ENCODE measurements at regions of chr5 and their contacts with region 1.

Region 1: DNA sequence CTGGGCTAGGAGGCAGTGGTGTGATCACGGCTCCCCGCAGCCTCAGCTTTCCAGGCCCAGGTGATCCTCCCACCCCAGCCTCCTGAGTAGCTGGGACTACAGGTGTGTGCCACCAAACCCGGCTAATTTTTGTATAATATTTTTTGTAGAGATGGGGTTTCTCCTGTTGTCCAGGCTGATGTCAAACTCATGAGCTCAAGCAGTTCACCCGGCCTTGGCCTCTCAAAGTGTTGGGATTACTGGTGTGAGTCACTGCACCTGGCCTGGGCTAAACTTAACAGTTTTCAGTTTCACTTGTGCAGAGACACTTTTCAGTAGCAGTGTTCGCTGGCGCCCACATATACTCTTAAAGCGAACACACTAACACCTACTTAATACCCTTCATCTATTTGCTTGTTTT is 205.6 kb upstream of the ZNF608 start:
- DNase-seq: peak; percentile 69
- ATAC-seq: peak; percentile 98
- H3K4me3 ChIP-seq: peak overlapping the region; percentile 18; the same call in 1 of the 2 replicates
- H3K27ac ChIP-seq: peak overlapping the region; percentile 75
- H3K4me1 ChIP-seq: peaks cover 15% of the 10 kb centered on the region
- H3K27me3 ChIP-seq: no peaks in the 10 kb centered on the region
- CTCF ChIP-seq: no peak
- EP300 ChIP-seq: peak in 1 of 2 experiments; percentile 57; a peak in 1 of 4 replicates
- POLR2A ChIP-seq: no peak
- RAD21 ChIP-seq: peak; percentile 28

Region 2: DNA sequence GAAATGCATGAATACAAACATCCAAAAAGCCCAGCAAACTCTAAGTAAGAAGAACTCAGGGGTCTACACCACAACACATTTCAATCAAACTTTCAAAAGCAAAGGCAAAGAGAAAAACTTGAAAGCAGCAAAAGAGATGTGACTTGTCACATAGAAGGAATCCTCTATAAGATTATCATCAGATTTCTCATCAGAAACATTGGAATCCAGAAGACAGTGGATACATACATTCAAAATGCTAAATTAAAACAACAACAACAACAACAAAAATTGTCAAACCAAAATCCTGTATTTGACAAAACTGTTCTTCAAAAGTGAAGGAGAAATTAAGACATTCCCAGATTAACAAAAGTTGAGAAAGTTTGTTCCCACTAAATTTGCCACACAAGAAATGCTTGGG is 568.4 kb before region 1 on chr5:
- CTCF ChIA-PET with region 1: no interaction called
- POLR2A ChIA-PET with region 1: no interaction called
- RAD21 ChIA-PET with region 1: no interaction called
- SMC1A ChIA-PET with region 1: no interaction called
- in situ Hi-C with region 1: no loop called
- intact Hi-C with region 1: no loop called
- DNase-seq: no peak
- ATAC-seq: no peak
- H3K4me3 ChIP-seq: no peak overlapping the region
- H3K27ac ChIP-seq: no peak overlapping the region
- H3K4me1 ChIP-seq: no peaks in the 10 kb centered on the region
- H3K27me3 ChIP-seq: no peaks in the 10 kb centered on the region
- CTCF ChIP-seq: no peak
- EP300 ChIP-seq: no peak
- POLR2A ChIP-seq: no peak
- RAD21 ChIP-seq: no peak

Region 3: DNA sequence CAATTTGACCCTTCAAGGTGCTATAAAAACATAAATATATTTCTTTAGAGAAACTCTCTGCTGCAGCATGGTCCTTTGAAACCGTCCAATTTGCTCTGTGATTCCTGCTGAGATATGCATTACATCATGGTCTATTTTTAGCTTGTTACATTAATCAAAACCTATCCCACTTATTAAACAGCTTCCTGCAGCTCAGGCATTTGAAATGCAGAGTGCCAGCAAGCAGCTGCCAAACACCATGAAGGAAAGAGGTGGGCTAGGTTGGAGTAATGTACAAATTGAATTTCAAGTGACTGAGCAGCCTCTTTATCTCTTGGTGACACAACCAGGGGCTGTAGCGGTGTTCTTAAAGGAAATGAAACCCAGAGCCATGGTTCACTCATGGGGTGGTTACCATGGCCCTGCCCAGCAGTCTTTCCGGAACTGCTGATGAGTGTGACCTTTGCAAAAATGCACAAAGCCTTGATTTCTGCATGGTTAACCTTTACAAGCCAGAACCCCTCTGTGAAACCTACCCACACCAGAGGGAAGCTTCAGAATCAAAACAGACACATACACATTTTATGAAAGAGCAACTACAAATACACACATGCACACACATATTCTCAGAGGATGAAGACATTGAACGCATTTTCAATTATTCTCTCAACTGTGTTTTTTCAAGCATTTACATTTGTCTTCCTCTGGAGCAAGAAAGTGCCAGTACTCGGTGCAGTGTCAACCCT is 49.8 kb before region 1 on chr5:
- CTCF ChIA-PET with region 1: interaction called, 3 read pairs
- POLR2A ChIA-PET with region 1: no interaction called
- RAD21 ChIA-PET with region 1: no interaction called
- SMC1A ChIA-PET with region 1: interaction called, 3 read pairs
- in situ Hi-C with region 1: no loop called
- intact Hi-C with region 1: loop called (anchors 5 kb)
- DNase-seq: peak; percentile 92
- ATAC-seq: peak; percentile 99
- H3K4me3 ChIP-seq: 0 out of 2 replicates have a peak overlapping the region, but pooled peaks have one; percentile 15
- H3K27ac ChIP-seq: peak overlapping the region; percentile 59
- H3K4me1 ChIP-seq: peaks cover 17% of the 10 kb centered on the region
- H3K27me3 ChIP-seq: no peaks in the 10 kb centered on the region
- CTCF ChIP-seq: no peak
- EP300 ChIP-seq: peak; percentile 77 to 90; a peak in 3 of 4 replicates
- POLR2A ChIP-seq: 0 out of 2 replicates have a peak, but pooled peaks have one; percentile 33
- RAD21 ChIP-seq: peak; percentile 33; the same call in 1 of the 2 replicates

Region 4: DNA sequence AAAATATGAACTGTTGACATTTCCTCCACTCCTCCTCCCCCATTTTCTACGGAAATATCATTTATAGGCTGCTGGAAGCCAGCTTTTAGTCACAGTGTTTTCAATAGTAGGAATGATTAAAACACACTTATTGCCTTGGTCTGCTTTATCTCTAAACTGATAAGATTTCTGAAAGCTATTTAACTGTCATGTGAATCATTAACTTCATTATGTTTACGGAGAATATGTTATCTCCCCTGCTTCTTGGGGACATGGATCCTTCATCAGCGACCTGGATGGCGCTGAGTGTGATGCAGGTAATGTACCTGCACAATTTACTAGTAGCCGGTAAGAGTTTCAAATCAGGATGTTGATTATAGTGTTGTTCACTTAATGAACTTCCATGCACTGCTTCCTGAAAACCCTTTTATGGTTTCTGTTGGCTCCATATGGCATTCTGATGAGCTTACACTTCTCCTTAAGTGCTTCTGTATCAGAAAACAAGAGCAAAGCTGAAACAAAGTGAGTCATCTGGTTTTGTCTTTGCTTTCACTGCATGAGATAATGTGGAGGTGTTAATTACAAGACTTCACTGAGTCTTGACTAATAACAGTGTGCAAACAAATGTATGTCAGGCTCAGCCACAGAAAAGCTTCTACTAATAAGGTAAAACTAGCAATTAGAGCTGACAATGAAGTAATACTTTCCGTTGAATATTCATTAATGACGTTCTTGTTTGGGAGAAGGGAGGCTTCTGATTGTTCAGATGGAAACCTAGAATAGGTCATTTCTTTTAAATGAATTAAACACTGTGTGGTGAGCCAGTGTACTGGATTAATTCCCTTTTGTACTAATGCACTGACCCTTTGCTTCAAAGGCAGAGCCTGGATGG is 43.3 kb before region 1 on chr5:
- CTCF ChIA-PET with region 1: interaction called, 3 read pairs
- POLR2A ChIA-PET with region 1: interaction called, 4 read pairs
- RAD21 ChIA-PET with region 1: interaction called, 15 read pairs
- SMC1A ChIA-PET with region 1: interaction called, 17 read pairs
- in situ Hi-C with region 1: no loop called
- intact Hi-C with region 1: loop called (anchors 5 kb)
- DNase-seq: peak; percentile 75
- ATAC-seq: peak; percentile 88
- H3K4me3 ChIP-seq: no peak overlapping the region
- H3K27ac ChIP-seq: peak overlapping the region; percentile 51
- H3K4me1 ChIP-seq: peaks cover 41% of the 10 kb centered on the region
- H3K27me3 ChIP-seq: no peaks in the 10 kb centered on the region
- CTCF ChIP-seq: no peak
- EP300 ChIP-seq: peak; percentile 96 to 98
- POLR2A ChIP-seq: no peak
- RAD21 ChIP-seq: peak; percentile 20; the same call in 1 of the 2 replicates

Region 5: GRCh38 chr5:124980163-124980941 is 28.3 kb after region 1 on chr5:
- CTCF ChIA-PET with region 1: no interaction called
- POLR2A ChIA-PET with region 1: interaction called, 4 read pairs
- RAD21 ChIA-PET with region 1: no interaction called
- SMC1A ChIA-PET with region 1: interaction called, 15 read pairs
- in situ Hi-C with region 1: no loop called
- intact Hi-C with region 1: no loop called
- DNase-seq: peak; percentile 48
- ATAC-seq: peak; percentile 91
- H3K4me3 ChIP-seq: peak overlapping the region; percentile 19
- H3K27ac ChIP-seq: peak overlapping the region; percentile 22
- H3K4me1 ChIP-seq: peaks cover 17% of the 10 kb centered on the region
- H3K27me3 ChIP-seq: no peaks in the 10 kb centered on the region
- CTCF ChIP-seq: no peak
- EP300 ChIP-seq: no peak; a peak in 1 of 4 replicates
- POLR2A ChIP-seq: no peak
- RAD21 ChIP-seq: peak; percentile 17; the same call in 1 of the 2 replicates

Region 6: GRCh38 chr5:125006011-125006685 is 54.1 kb after region 1 on chr5:
- CTCF ChIA-PET with region 1: interaction called, 6 read pairs
- POLR2A ChIA-PET with region 1: interaction called, 9 read pairs
- RAD21 ChIA-PET with region 1: interaction called, 20 read pairs
- SMC1A ChIA-PET with region 1: interaction called, 30 read pairs
- in situ Hi-C with region 1: no loop called
- intact Hi-C with region 1: no loop called
- DNase-seq: peak; percentile 71
- ATAC-seq: peak; percentile 82
- H3K4me3 ChIP-seq: 0 out of 2 replicates have a peak overlapping the region, but pooled peaks have one; percentile 0
- H3K27ac ChIP-seq: peak overlapping the region; percentile 69
- H3K4me1 ChIP-seq: peaks cover 18% of the 10 kb centered on the region
- H3K27me3 ChIP-seq: no peaks in the 10 kb centered on the region
- CTCF ChIP-seq: no peak
- EP300 ChIP-seq: peak; percentile 92 to 95
- POLR2A ChIP-seq: no peak
- RAD21 ChIP-seq: peak; percentile 36